ENCODE measurements at regions of chr5 and their contacts with region 1.

Region 1: GRCh38 chr5:1568201-1568979 is 44.6 kb upstream of the LPCAT1 start:
- DNase-seq: no peak
- H3K4me3 ChIP-seq: no peak overlapping the region
- H3K27ac ChIP-seq: peak overlapping the region; percentile 70 to 75
- H3K4me1 ChIP-seq: peaks cover 8 to 25% of the 10 kb centered on the region in 2 donors
- H3K27me3 ChIP-seq: no peaks in the 10 kb centered on the region
- CTCF ChIP-seq: no peak

Region 2: GRCh38 chr5:1182633-1183423 is 385.6 kb before region 1 on chr5:
- intact Hi-C with region 1: no loop called
- DNase-seq: no peak
- H3K4me3 ChIP-seq: no peak overlapping the region
- H3K27ac ChIP-seq: no peak overlapping the region
- H3K4me1 ChIP-seq: no peaks in the 10 kb centered on the region
- H3K27me3 ChIP-seq: no peaks in the 10 kb centered on the region
- CTCF ChIP-seq: no peak

Region 3: GRCh38 chr5:1437226-1437851 is 131.1 kb before region 1 on chr5:
- intact Hi-C with region 1: no loop called
- DNase-seq: peak in 1 of 2 donors; percentile 41
- H3K4me3 ChIP-seq: no peak overlapping the region
- H3K27ac ChIP-seq: no peak overlapping the region
- H3K4me1 ChIP-seq: no peaks in the 10 kb centered on the region
- H3K27me3 ChIP-seq: no peaks in the 10 kb centered on the region
- CTCF ChIP-seq: no peak

Region 4: GRCh38 chr5:1511651-1512540 is 56.5 kb before region 1 on chr5:
- intact Hi-C with region 1: no loop called
- DNase-seq: peak in 1 of 2 donors; percentile 49
- H3K4me3 ChIP-seq: no peak overlapping the region
- H3K27ac ChIP-seq: no peak overlapping the region
- H3K4me1 ChIP-seq: no peaks in the 10 kb centered on the region
- H3K27me3 ChIP-seq: no peaks in the 10 kb centered on the region
- CTCF ChIP-seq: no peak

Region 5: DNA sequence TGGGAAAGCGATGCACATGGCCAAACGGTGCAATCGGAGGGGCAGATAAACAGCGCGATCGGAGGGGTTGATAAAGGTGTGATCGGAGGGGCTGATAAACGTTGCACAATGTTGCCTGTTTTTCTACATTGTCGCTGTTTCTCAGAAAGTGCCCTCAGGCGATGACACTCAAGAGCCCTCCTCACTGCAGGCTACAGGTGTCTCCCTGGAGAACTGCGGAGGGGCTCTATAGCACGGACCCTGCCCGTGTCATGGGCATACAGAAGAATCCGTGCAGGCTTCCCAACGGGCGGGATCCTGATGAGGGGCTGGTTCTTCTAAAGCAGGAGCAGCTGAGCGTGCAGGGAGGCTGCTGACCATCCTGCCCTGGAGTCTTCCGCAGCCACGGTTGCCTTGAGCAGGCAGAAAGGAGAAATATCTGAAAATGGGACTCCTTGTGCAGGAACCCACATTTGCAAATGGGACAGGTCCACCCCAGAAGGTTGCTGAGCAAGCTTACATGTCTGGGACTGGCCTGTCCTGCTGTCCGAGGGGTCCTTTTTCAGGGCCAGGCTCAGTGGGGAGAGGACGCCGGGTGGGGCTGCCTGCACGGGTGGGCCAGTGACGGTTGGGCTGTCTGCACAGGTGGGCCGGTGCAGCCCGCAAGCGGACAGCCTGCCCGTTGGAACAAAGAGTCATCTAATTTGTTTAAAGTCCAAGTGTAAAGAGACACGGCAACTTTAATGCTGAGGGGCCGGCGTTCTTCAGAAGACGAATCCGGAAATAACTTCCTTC is 19.5 kb before region 1 on chr5:
- intact Hi-C with region 1: loop called (anchors 2 kb)
- DNase-seq: no peak
- H3K4me3 ChIP-seq: no peak overlapping the region
- H3K27ac ChIP-seq: no peak overlapping the region
- H3K4me1 ChIP-seq: no peaks in the 10 kb centered on the region
- H3K27me3 ChIP-seq: no peaks in the 10 kb centered on the region
- CTCF ChIP-seq: no peak

Region 6: DNA sequence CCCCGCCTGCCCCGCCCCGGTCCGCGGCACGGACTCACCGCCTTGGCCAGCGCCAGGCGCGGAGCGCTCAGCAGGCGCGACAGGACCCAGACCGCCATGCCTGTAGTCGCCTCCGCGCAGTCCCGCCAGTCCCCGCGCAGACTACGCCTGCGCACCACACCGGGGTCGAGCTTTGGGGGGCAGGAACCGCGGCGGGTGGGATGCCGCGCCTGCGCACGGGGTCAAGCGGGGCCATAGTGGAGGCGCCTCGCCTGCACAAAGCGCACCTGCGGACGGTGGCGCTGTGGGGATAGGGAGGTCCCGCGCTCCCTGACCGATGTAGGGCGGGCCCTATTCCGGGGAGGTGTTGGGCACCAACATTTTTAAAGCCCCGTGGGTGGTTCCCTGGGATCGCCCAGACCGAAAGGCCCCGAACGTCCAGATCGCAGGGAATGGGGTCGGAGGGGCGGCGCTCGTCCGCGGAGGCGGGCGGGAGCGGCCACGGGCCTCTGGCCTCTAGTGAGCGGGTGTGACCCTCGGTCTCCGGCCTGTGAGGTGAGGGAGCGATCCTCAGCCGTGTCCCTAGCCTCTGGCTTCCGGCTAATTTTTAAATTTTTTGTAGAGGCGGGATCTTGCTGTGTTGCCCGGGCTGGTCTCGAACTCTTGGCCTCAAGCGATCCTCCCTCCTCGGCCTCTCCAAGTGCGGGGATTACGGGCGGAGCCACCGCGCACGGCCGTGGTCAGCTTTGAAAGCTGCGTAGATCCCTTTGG is 26.1 kb after region 1 on chr5:
- intact Hi-C with region 1: loop called (anchors 2 kb)
- DNase-seq: peak in 1 of 2 donors; percentile 81
- H3K4me3 ChIP-seq: peak overlapping the region; percentile 67 to 71
- H3K27ac ChIP-seq: peak overlapping the region; percentile 78 to 82
- H3K4me1 ChIP-seq: peaks cover 0 to 3% of the 10 kb centered on the region in 2 donors
- H3K27me3 ChIP-seq: no peaks in the 10 kb centered on the region
- CTCF ChIP-seq: peak in 2 of 3 experiments; percentile 41 to 48